ENCODE measurements at regions of chr5 and their contacts with region 1.

Region 1: DNA sequence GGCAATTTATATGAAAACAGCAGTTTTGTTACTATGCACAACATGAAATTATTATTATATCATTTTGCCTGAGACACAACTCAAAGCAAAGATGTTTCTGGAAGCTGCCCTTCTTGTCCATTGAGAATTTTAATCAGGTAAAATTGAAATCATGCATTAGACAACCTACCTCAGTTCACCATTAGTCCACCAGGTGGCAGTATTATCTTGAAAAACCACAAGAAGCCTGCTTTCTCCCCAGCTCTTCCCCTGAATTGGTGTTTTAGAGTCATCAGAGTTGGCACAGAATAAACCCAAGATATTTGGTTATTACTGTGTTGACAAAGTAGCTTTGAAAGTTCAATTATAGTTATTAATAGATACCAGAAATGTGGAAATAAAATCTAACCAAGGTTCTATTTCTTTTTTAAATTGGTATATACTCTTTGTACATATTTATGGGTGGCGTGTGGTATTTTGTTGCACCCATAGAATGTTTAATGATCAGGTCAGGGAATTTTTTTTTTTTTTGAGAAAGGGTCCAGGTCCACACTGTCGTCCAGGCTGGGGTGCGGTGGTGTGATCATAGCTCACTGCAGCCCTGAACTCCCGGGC is 25.7 kb downstream of the UTP15 start:
- DNase-seq: peak; percentile 14
- ATAC-seq: peak; percentile 74
- H3K4me3 Mint-ChIP-seq: no peak overlapping the region
- H3K27ac Mint-ChIP-seq: no peak overlapping the region
- H3K4me1 Mint-ChIP-seq: no peaks in the 10 kb centered on the region
- H3K27me3 Mint-ChIP-seq: no peaks in the 10 kb centered on the region
- CTCF ChIP-seq: peak; percentile 64

Region 2: DNA sequence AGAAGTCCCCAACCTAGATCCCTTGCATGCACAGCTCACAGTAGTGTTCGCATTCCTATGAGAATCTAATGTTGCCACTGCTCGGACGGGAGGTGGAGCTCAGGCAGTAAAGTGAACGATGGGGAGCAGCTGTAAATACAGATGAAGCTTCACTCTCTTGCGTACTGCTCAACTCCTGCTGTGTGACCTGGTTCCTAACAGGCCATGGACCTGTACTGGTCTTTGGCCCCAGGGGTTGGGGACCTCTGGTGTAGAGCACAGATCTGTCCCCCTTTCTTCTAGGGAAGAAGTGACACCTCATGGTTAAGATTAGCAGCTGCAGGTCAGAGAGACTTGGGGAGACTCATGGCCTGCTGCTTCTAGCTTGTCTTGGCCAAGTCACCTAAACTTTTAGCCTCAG is 41.9 kb after region 1 on chr5:
- CTCF ChIA-PET with region 1: interaction called, 22 read pairs
- POLR2A ChIA-PET with region 1: no interaction called
- DNase-seq: no peak
- ATAC-seq: peak; percentile 90
- H3K4me3 Mint-ChIP-seq: no peak overlapping the region
- H3K27ac Mint-ChIP-seq: no peak overlapping the region
- H3K4me1 Mint-ChIP-seq: no peaks in the 10 kb centered on the region
- H3K27me3 Mint-ChIP-seq: peaks cover 14% of the 10 kb centered on the region
- CTCF ChIP-seq: no peak

Region 3: GRCh38 chr5:73792687-73793320 is 201.6 kb after region 1 on chr5:
- CTCF ChIA-PET with region 1: interaction called, 84 read pairs
- POLR2A ChIA-PET with region 1: no interaction called
- DNase-seq: peak; percentile 83
- ATAC-seq: peak; percentile 90
- H3K4me3 Mint-ChIP-seq: no peak overlapping the region
- H3K27ac Mint-ChIP-seq: no peak overlapping the region
- H3K4me1 Mint-ChIP-seq: peaks cover 16% of the 10 kb centered on the region
- H3K27me3 Mint-ChIP-seq: no peaks in the 10 kb centered on the region
- CTCF ChIP-seq: peak; percentile 81